Psoas muscle (tissue), 8 donors: ENCODE measurements at regions of chr11 and their contacts with region 1.

Region 1: DNA sequence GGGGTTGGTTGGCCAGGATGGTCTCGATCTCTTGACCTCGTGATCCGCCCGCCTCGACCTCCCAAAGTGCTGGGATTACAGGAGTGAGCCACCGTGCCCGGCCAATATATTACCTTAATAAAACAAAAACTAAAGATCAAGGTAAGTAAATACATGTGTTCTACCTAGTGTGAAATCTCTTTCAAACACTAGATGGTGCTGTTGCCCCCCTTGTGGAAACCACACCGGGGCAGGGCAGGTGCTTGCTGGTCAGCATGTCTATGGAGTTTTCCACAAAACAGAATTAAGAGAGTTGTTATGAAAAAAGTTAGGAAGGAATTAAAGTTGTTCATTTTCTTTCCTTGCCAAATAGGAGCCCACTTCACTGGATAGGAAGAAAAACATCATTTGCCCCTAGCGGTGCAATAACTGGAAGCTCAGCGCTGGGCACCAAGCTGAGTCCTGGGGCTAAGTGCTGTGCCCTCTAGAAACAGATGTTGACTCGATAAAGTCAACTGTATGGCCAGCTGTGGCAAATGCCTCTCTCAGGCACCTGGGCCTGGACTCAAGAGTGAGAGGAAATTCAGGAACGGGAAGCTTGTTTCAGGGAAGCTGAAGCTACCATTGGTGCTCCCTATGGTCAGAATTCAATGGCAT is 6.3 kb upstream of the KCNJ5 start:
- DNase-seq: no peak
- ATAC-seq: peak; percentile 74 to 89 (median 82)
- H3K4me3 ChIP-seq: no peak overlapping the region
- H3K27ac ChIP-seq: no peak overlapping the region
- H3K4me1 ChIP-seq: no peaks in the 10 kb centered on the region
- H3K27me3 ChIP-seq: peaks cover 0 to 37% (median 6%) of the 10 kb centered on the region in 3 donors
- CTCF ChIP-seq: peak; percentile 86

Region 2: GRCh38 chr11:128956401-128957201 is 71.8 kb after region 1 on chr11:
- intact Hi-C with region 1: loop called (anchors 1 to 2 kb)
- DNase-seq: no peak
- ATAC-seq: peak; percentile 73 to 88 (median 75)
- H3K4me3 ChIP-seq: no peak overlapping the region
- H3K27ac ChIP-seq: no peak overlapping the region
- H3K4me1 ChIP-seq: no peaks in the 10 kb centered on the region
- H3K27me3 ChIP-seq: peaks cover 0 to 3% (median 0%) of the 10 kb centered on the region in 3 donors
- CTCF ChIP-seq: peak; percentile 73

Region 3: GRCh38 chr11:129331871-129332274 is 447.1 kb after region 1 on chr11:
- intact Hi-C with region 1: loop called in 1 of 2 experiments (anchors 10 kb)
- DNase-seq: peak; percentile 77 to 84
- ATAC-seq: peak; percentile 81 to 95 (median 94)
- H3K4me3 ChIP-seq: no peak overlapping the region
- H3K27ac ChIP-seq: no peak overlapping the region
- H3K4me1 ChIP-seq: no peaks in the 10 kb centered on the region
- H3K27me3 ChIP-seq: no peaks in the 10 kb centered on the region
- CTCF ChIP-seq: peak; percentile 85

Region 4: DNA sequence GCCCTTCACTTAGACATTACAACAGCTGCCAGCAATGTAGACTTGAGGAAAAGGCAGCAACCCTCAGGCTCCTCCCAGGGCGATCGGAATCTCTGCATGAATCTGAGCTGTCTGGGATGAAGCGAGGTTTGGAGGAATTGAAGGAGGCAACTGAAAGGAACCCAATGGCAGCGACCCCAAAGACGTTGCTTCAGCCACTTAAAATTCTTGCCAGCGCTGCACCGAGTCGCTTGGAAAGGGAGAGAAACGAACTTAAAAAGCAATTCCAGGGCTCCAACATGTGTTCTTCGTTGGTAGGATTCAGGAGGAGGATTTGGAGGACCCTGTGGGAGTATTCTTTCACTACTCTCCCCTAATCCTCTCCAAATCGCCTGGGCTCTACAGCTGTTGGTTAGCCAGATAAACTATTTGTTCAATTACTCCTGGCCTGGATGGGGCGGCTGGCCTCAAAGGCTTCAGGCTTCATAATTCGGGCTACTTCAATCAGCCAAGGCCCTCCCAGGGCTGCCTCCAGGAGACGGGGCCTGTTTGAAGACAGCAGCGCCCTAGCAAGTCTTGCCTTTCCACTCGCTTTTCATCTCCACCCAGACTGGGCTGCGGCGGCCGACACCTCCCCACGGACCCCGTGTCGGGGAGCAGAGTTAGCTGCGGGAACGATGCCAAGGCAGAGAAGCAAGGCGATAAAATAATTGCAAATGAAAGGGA is 858.4 kb after region 1 on chr11:
- intact Hi-C with region 1: loop called in 1 of 2 experiments (anchors 10 kb)
- DNase-seq: no peak
- ATAC-seq: no peak
- H3K4me3 ChIP-seq: peak overlapping the region; percentile 28
- H3K27ac ChIP-seq: no peak overlapping the region
- H3K4me1 ChIP-seq: no peaks in the 10 kb centered on the region
- H3K27me3 ChIP-seq: peaks cover 2 to 26% (median 6%) of the 10 kb centered on the region in 3 donors
- CTCF ChIP-seq: no peak